Activated CD4-positive, alpha-beta memory T cell treated with anti-CD3 and anti-CD28 coated beads for 36 hours (primary cell): ENCODE measurements at regions of chr14 and their contacts with region 1.

Region 1: GRCh38 chr14:59028476-59029202 is 159.8 kb upstream of the DAAM1 start:
- DNase-seq: peak; percentile 53
- H3K4me3 Mint-ChIP-seq: no peak overlapping the region
- H3K27ac Mint-ChIP-seq: no peak overlapping the region
- H3K4me1 Mint-ChIP-seq: peaks cover 3% of the 10 kb centered on the region
- H3K27me3 Mint-ChIP-seq: peaks cover 14% of the 10 kb centered on the region

Region 2: GRCh38 chr14:58994130-58994529 is 34.5 kb before region 1 on chr14:
- CTCF ChIA-PET with region 1: no interaction called
- POLR2A ChIA-PET with region 1: no interaction called
- intact Hi-C with region 1: no loop called
- DNase-seq: no peak
- H3K4me3 Mint-ChIP-seq: no peak overlapping the region
- H3K27ac Mint-ChIP-seq: no peak overlapping the region
- H3K4me1 Mint-ChIP-seq: no peaks in the 10 kb centered on the region
- H3K27me3 Mint-ChIP-seq: peaks cover 5% of the 10 kb centered on the region

Region 3: DNA sequence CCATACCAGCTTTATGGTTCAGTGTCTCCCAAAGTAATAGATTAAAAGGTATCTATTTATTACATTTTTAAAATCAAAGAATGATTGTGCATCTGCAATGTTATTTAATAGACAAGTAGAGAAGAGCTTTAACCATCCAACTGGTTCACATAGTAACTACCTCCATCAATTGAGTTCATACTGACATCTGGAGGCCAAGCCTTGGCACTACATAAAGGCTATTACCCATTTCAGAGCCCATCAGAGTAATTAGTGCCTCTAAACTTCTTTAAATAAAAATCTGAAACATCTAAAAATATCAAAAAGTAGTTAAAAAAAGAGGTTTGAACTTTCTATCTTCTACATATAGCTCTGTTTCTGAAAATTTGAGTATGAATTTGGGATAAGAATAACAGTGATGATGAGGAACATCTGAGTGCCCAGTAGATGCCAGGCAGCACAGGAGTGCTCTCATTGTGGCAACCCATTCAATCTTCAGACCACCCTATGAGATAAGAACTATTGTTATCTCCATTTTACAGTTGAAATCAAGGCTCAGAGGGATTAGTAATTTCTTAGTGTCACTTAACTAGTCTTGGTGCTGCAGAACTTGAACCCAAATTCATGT is 26.9 kb after region 1 on chr14:
- CTCF ChIA-PET with region 1: interaction called, 4 read pairs
- POLR2A ChIA-PET with region 1: no interaction called
- intact Hi-C with region 1: loop called (anchors 2 kb)
- DNase-seq: peak; percentile 16
- H3K4me3 Mint-ChIP-seq: no peak overlapping the region
- H3K27ac Mint-ChIP-seq: no peak overlapping the region
- H3K4me1 Mint-ChIP-seq: no peaks in the 10 kb centered on the region
- H3K27me3 Mint-ChIP-seq: peaks cover 5% of the 10 kb centered on the region

Region 4: GRCh38 chr14:59454131-59454530 is 425.5 kb after region 1 on chr14:
- CTCF ChIA-PET with region 1: no interaction called
- POLR2A ChIA-PET with region 1: no interaction called
- intact Hi-C with region 1: loop called (anchors 10 kb)
- DNase-seq: no peak
- H3K4me3 Mint-ChIP-seq: no peak overlapping the region
- H3K27ac Mint-ChIP-seq: no peak overlapping the region
- H3K4me1 Mint-ChIP-seq: no peaks in the 10 kb centered on the region
- H3K27me3 Mint-ChIP-seq: no peaks in the 10 kb centered on the region